ENCODE measurements at regions of chr10 and their contacts with region 1.

Region 1: GRCh38 chr10:44310762-44311562 is 73.9 kb downstream of the CXCL12 start:
- DNase-seq: peak; percentile 94
- H3K4me3 ChIP-seq: peak overlapping the region in 3 of 4 donors; percentile 26 to 39 (median 36)
- H3K27ac ChIP-seq: peak overlapping the region in 2 of 4 donors; percentile 15 to 50
- H3K4me1 ChIP-seq: peaks cover 0 to 26% (median 10%) of the 10 kb centered on the region in 4 donors
- H3K27me3 ChIP-seq: no peaks in the 10 kb centered on the region
- CTCF ChIP-seq: peak; percentile 72 to 90 (median 86)
- EP300 ChIP-seq: no peak
- POLR2A ChIP-seq: no peak

Region 2: GRCh38 chr10:43671656-43672531 is 639.1 kb before region 1 on chr10:
- intact Hi-C with region 1: loop called (anchors 5 kb)
- DNase-seq: peak; percentile 77
- H3K4me3 ChIP-seq: no peak overlapping the region
- H3K27ac ChIP-seq: peak overlapping the region in 1 of 4 donors; percentile 29
- H3K4me1 ChIP-seq: peaks cover 0 to 23% (median 17%) of the 10 kb centered on the region in 4 donors
- H3K27me3 ChIP-seq: peaks cover 0 to 20% (median 10%) of the 10 kb centered on the region in 3 donors
- CTCF ChIP-seq: peak; percentile 74 to 87 (median 82)
- EP300 ChIP-seq: no peak
- POLR2A ChIP-seq: no peak

Region 3: GRCh38 chr10:43689955-43690771 is 620.8 kb before region 1 on chr10:
- intact Hi-C with region 1: loop called (anchors 1 kb)
- DNase-seq: peak; percentile 91
- H3K4me3 ChIP-seq: peak overlapping the region; percentile 40 to 58 (median 55)
- H3K27ac ChIP-seq: peak overlapping the region; percentile 74 to 78 (median 76)
- H3K4me1 ChIP-seq: peaks cover 0 to 24% (median 14%) of the 10 kb centered on the region in 4 donors
- H3K27me3 ChIP-seq: no peaks in the 10 kb centered on the region
- CTCF ChIP-seq: peak; percentile 70 to 98 (median 78)
- EP300 ChIP-seq: no peak
- POLR2A ChIP-seq: no peak

Region 4: GRCh38 chr10:44068716-44069482 is 242.1 kb before region 1 on chr10:
- intact Hi-C with region 1: loop called (anchors 10 kb)
- DNase-seq: no peak
- H3K4me3 ChIP-seq: no peak overlapping the region
- H3K27ac ChIP-seq: peak overlapping the region in 2 of 4 donors; percentile 10 to 43
- H3K4me1 ChIP-seq: peaks cover 0 to 70% (median 64%) of the 10 kb centered on the region in 4 donors
- H3K27me3 ChIP-seq: no peaks in the 10 kb centered on the region
- CTCF ChIP-seq: no peak
- EP300 ChIP-seq: no peak
- POLR2A ChIP-seq: no peak

Region 5: GRCh38 chr10:44334621-44335184 is 23.7 kb after region 1 on chr10:
- intact Hi-C with region 1: no loop called
- DNase-seq: no peak
- H3K4me3 ChIP-seq: no peak overlapping the region
- H3K27ac ChIP-seq: no peak overlapping the region
- H3K4me1 ChIP-seq: no peaks in the 10 kb centered on the region
- H3K27me3 ChIP-seq: no peaks in the 10 kb centered on the region
- CTCF ChIP-seq: no peak
- EP300 ChIP-seq: no peak
- POLR2A ChIP-seq: no peak

Region 6: DNA sequence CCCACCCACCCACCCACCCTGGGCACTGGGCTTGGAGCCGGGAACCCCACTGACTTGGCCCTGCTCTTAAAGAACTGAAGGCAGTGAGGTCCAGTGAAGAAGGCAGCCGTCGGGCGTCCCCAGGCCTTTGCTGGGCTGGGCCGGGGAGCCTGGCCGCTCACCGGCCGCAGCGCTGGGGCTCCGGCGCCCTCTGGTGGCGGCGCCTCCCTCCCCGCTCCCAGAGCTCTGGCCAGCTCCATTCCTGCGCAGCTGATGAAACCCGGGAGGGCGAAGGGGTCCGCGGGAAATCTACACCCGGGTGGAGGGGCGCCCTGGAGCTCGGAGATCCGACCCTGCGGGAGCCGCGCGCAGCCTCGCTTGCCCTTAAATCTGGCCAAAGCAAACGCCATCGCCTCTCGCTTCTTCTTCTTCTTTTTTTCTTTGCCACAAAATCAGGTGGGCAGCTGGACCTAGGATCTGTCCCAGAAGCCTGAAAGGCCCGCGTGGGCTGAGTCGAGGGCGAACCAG is 75.6 kb after region 1 on chr10:
- intact Hi-C with region 1: loop called (anchors 2 kb)
- DNase-seq: peak; percentile 81
- H3K4me3 ChIP-seq: no peak overlapping the region
- H3K27ac ChIP-seq: peak overlapping the region in 2 of 4 donors; percentile 68 to 75
- H3K4me1 ChIP-seq: peaks cover 0 to 24% (median 18%) of the 10 kb centered on the region in 4 donors
- H3K27me3 ChIP-seq: peaks cover 2 to 35% (median 27%) of the 10 kb centered on the region in 3 donors
- CTCF ChIP-seq: peak; percentile 67 to 93 (median 76)
- EP300 ChIP-seq: no peak
- POLR2A ChIP-seq: no peak

Region 7: GRCh38 chr10:44742248-44742647 is 431.3 kb after region 1 on chr10:
- intact Hi-C with region 1: no loop called
- DNase-seq: no peak
- H3K4me3 ChIP-seq: no peak overlapping the region
- H3K27ac ChIP-seq: no peak overlapping the region
- H3K4me1 ChIP-seq: peaks cover 0 to 13% (median 0%) of the 10 kb centered on the region in 4 donors
- H3K27me3 ChIP-seq: no peaks in the 10 kb centered on the region
- CTCF ChIP-seq: no peak
- EP300 ChIP-seq: no peak
- POLR2A ChIP-seq: no peak

Measured in sigmoid colon (tissue), 7 donors.